PC-9 (cell line): ENCODE measurements at regions of chr16 and their contacts with region 1.

Region 1: GRCh38 chr16:30052671-30053372 is 12.7 kb upstream of the ALDOA start:
- DNase-seq: peak; percentile 83 to 98
- H3K4me3 ChIP-seq: peak overlapping the region; percentile 66
- H3K27ac ChIP-seq: peak overlapping the region; percentile 28
- H3K4me1 ChIP-seq: peaks cover 20% of the 10 kb centered on the region
- H3K27me3 ChIP-seq: no peaks in the 10 kb centered on the region
- CTCF ChIP-seq: no peak

Region 2: GRCh38 chr16:30026449-30026848 is 26.4 kb before region 1 on chr16:
- CTCF ChIA-PET with region 1: interaction called, 7 read pairs
- POLR2A ChIA-PET with region 1: interaction called, 31 read pairs
- intact Hi-C with region 1: no loop called
- DNase-seq: no peak
- H3K4me3 ChIP-seq: no peak overlapping the region
- H3K27ac ChIP-seq: no peak overlapping the region
- H3K4me1 ChIP-seq: no peaks in the 10 kb centered on the region
- H3K27me3 ChIP-seq: peaks cover 80% of the 10 kb centered on the region
- CTCF ChIP-seq: no peak

Region 3: DNA sequence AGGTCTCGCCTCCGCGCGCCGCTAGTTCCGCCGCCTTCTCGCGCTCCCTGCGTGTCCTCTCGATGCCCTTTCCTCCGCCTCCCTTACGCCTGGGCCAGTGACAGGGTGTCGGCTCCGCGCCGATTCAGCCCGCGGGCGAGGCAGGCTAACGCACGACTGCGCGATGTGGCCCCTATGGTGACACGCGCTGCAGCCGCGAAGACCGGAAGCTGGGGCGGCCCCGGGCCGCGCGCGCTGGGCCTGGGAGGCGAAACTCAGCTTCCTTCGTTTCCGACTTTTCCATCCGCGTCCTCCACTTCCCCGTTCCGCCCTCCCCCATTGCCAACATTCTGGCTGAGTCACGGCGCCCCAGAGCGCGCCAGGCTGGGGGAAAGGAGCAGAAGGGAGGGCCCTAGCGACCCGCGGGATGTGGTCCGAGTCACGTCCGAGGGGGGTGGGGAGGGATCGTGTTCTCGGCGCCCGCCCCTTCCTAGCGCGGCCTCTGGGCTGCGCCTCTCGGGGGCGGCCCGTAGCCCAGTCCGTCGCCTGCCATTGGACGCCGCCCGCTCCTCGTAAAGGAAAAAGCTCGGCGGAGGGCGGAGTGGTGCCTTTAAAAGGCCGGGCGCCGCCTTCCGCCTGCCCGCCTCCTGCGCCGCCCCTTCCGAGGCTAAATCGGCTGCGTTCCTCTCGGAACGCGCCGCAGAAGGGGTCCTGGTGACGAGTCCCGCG is 12.5 kb after region 1 on chr16 and contains the start of gene ALDOA:
- CTCF ChIA-PET with region 1: interaction called, 4 read pairs
- POLR2A ChIA-PET with region 1: interaction called, 19 read pairs
- intact Hi-C with region 1: loop called (anchors 1 kb)
- DNase-seq: peak; percentile 95 to 100
- H3K4me3 ChIP-seq: peak within 1 kb of the TSS; percentile 94
- H3K27ac ChIP-seq: peak within 1 kb of the TSS; percentile 92
- H3K4me1 ChIP-seq: peaks cover 50% of the 10 kb centered on the region
- H3K27me3 ChIP-seq: no peaks in the 10 kb centered on the region
- CTCF ChIP-seq: no peak
- total RNA-seq, gene ALDOA: 2,395 and 3,090 TPM in 2 replicates

Region 4: GRCh38 chr16:30122604-30123160 is 69.9 kb after region 1 on chr16:
- CTCF ChIA-PET with region 1: no interaction called
- POLR2A ChIA-PET with region 1: no interaction called
- intact Hi-C with region 1: no loop called
- DNase-seq: no peak
- H3K4me3 ChIP-seq: peak overlapping the region; percentile 90
- H3K27ac ChIP-seq: no peak overlapping the region
- H3K4me1 ChIP-seq: peaks cover 25% of the 10 kb centered on the region
- H3K27me3 ChIP-seq: no peaks in the 10 kb centered on the region
- CTCF ChIP-seq: no peak